ENCODE measurements at regions of chr16 and their contacts with region 1.

Region 1: DNA sequence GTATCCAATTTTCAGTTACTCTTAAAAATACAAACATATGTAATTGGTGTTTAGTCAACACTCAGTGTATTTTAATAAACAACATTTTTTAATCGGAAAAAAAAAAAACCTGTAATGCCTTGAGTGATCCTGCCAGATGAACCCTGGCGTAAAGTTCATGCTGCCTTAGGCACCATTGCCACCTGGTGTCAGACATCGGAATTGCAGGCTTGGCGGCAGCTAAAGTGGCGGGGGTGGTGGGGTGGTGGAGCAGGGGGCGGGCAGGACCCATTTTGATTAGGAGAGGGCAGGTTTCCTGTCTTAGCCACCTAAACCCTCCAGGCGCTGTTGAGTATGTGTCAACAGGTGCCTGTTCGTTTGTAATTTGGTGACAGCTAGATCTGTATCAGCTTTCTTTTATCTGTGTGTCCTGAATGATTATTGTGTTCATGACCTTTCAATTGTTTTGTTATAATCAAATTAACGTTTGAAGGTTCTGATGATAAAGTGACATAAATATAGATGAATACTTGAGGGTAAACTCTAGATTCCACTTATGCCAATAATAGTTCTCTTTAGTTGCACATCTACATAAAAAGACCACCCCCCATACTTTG is 588.7 kb downstream of the CDH13 start:
- DNase-seq: peak; percentile 47 to 97
- H3K4me3 ChIP-seq: no peak overlapping the region
- H3K27ac ChIP-seq: no peak overlapping the region
- H3K4me1 ChIP-seq: peaks cover 0 to 8% (median 0%) of the 10 kb centered on the region in 4 experiments; a peak in 3 of 7 replicates
- H3K27me3 ChIP-seq: peaks cover 0 to 1% (median 0%) of the 10 kb centered on the region in 4 experiments; a peak in 1 of 7 replicates
- CTCF ChIP-seq: peak; percentile 84 to 94 (median 93)
- EP300 ChIP-seq: no peak
- POLR2A ChIP-seq: no peak
- RAD21 ChIP-seq: peak; percentile 93 to 97

Region 2: GRCh38 chr16:82995924-82996441 is 219.5 kb before region 1 on chr16:
- CTCF ChIA-PET with region 1: no interaction called
- POLR2A ChIA-PET with region 1: no interaction called
- DNase-seq: no peak
- H3K4me3 ChIP-seq: no peak overlapping the region
- H3K27ac ChIP-seq: no peak overlapping the region
- H3K4me1 ChIP-seq: no peaks in the 10 kb centered on the region
- H3K27me3 ChIP-seq: no peaks in the 10 kb centered on the region
- CTCF ChIP-seq: no peak
- EP300 ChIP-seq: no peak
- POLR2A ChIP-seq: no peak
- RAD21 ChIP-seq: no peak

Region 3: GRCh38 chr16:83113317-83113716 is 102.2 kb before region 1 on chr16:
- CTCF ChIA-PET with region 1: interaction called, 14 read pairs
- POLR2A ChIA-PET with region 1: no interaction called
- DNase-seq: peak in 1 of 2 experiments; percentile 59
- H3K4me3 ChIP-seq: no peak overlapping the region
- H3K27ac ChIP-seq: no peak overlapping the region
- H3K4me1 ChIP-seq: peaks cover 0 to 8% (median 4%) of the 10 kb centered on the region in 4 experiments; a peak in 4 of 7 replicates
- H3K27me3 ChIP-seq: peaks cover 0 to 5% (median 0%) of the 10 kb centered on the region in 4 experiments; a peak in 2 of 7 replicates
- CTCF ChIP-seq: peak; percentile 71 to 77 (median 72)
- EP300 ChIP-seq: no peak
- POLR2A ChIP-seq: no peak
- RAD21 ChIP-seq: peak; percentile 54 to 71

Region 4: GRCh38 chr16:83143788-83144187 is 71.7 kb before region 1 on chr16:
- CTCF ChIA-PET with region 1: no interaction called
- POLR2A ChIA-PET with region 1: no interaction called
- DNase-seq: no peak
- H3K4me3 ChIP-seq: no peak overlapping the region
- H3K27ac ChIP-seq: no peak overlapping the region
- H3K4me1 ChIP-seq: no peaks in the 10 kb centered on the region
- H3K27me3 ChIP-seq: no peaks in the 10 kb centered on the region
- CTCF ChIP-seq: no peak
- EP300 ChIP-seq: no peak
- POLR2A ChIP-seq: no peak
- RAD21 ChIP-seq: no peak

Region 5: DNA sequence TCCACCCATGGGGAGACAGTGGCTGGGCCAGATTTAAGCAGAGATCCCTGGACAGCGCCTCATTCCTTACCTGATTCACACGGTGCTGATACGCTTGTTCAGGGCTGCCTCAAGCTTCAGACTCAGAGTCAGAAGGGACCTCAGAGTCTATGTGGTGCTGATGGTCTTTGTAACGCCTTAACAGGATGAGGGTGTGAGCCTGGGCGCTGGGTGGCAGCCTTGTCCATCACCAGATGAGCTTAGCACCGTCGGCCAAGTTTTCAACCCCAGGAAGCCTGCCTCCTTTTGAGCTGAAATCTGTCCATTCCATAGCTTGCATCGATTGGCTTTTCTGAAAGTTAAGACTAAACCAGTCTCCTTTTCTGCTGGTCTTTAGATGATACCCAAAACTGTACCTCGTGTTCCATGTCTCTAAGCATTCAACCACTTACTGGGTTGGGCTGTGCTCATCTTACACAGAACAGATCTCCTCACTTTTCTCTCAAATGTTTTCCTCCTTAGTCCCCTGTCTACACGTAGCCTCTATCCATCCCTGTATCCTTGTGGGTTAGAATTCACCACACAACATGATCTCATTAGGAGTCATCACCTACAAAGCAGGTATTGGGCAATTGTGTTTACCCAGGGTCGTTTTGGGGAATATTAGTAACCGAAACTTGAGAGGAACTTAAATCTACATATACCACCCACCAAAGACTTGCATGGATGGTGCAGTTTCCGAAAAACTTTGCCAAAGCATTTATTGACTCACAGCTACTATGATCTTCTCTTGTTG is 15.3 kb before region 1 on chr16:
- CTCF ChIA-PET with region 1: interaction called, 20 read pairs
- POLR2A ChIA-PET with region 1: no interaction called
- DNase-seq: no peak
- H3K4me3 ChIP-seq: no peak overlapping the region
- H3K27ac ChIP-seq: no peak overlapping the region
- H3K4me1 ChIP-seq: no peaks in the 10 kb centered on the region
- H3K27me3 ChIP-seq: no peaks in the 10 kb centered on the region
- CTCF ChIP-seq: peak in 2 of 3 experiments; percentile 11 to 28; a peak in 1 of 4 replicates
- EP300 ChIP-seq: no peak
- POLR2A ChIP-seq: no peak
- RAD21 ChIP-seq: peak; percentile 34 to 53; a peak in 3 of 4 replicates

Region 6: GRCh38 chr16:83247767-83248372 is 32.4 kb after region 1 on chr16:
- CTCF ChIA-PET with region 1: interaction called, 10 read pairs
- POLR2A ChIA-PET with region 1: no interaction called
- DNase-seq: no peak
- H3K4me3 ChIP-seq: no peak overlapping the region
- H3K27ac ChIP-seq: no peak overlapping the region
- H3K4me1 ChIP-seq: peaks cover 0 to 5% (median 3%) of the 10 kb centered on the region in 4 experiments; a peak in 3 of 7 replicates
- H3K27me3 ChIP-seq: no peaks in the 10 kb centered on the region
- CTCF ChIP-seq: no peak
- EP300 ChIP-seq: no peak
- POLR2A ChIP-seq: no peak
- RAD21 ChIP-seq: no peak